ENCODE measurements at regions of chr19 and their contacts with region 1.

Region 1: DNA sequence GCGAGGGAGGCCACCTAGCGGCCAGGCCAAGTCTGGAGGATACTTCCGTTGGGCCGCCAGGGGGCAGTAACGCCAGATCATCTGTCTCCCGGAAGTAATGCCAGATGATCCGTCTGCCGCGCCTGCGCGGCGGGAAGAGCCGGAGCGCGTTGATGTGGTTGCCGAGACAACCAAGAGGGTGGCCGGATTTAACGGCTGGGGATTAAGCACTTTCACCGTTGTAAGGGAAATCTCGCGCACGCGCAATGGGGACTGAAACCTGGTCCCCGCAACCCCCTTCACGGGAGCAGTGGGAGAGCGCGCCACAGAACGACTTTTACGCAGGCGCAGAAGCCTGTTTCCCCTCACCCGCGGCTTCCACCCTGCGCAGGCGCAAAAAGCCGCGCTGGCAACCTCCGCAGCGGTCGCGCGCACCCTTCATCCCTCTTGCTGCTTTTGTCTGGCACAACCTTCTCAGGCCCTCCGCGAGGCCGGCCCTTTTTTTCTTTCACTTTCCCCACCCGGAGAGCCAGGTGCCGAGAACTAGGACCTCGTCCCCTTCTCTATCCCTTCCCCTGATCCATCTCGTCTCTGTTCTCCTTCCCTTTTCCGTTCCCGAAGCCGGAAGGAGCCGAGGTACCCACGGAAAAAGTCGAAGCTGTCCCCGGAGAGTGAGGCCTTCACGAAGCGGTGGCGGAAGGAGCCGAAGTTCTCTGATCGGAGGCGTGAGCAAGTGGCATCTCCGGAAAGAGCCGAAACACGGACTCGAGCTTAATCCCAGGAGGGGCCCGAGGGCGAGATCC is 886 bp upstream of the U2AF2 start:
- DNase-seq: peak; percentile 89

Region 2: DNA sequence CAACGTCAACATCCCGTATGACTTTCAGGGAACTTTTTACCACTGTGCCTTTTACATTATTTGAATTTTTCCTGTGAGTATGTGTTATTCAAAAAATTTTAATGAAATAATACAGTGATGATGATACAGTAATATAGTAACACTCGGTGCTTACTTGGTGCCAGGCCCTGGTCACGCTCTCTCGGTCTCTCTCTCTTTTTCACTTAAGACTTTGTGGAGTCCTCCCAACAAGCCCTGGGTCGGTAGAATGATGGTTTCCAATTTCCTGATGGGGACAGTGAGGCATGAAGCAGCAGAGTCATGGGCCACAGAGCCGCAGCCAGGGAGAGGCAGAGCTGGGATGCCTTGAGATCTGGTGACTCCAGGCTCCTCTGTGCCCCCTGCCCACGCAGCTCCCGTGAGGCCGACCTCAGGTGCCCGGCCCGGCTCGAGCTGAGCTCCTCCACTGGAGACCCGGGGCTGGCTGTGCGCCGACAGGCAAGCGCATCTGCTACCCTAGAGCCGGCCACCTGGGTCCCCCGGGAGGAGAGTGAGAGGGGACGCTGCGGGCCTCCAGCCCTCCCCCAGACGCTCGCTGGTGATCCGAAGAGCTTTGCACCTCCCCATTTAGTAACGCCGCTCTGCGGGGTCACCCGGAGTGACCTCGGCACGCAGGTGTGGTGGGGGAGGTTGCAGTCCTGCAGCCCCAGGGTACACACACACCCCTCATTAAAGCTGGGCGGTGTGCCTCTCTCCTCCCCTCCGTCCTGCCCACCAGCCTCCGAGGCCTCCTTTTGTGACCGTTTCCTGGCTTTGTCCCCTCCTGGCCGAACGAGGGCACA is 104.2 kb before region 1 on chr19:
- CTCF ChIA-PET with region 1: no interaction called
- POLR2A ChIA-PET with region 1: no interaction called
- DNase-seq: no peak

Region 3: GRCh38 chr19:55632463-55632834 is 21.5 kb before region 1 on chr19:
- CTCF ChIA-PET with region 1: interaction called, 3 read pairs
- POLR2A ChIA-PET with region 1: interaction called, 16 read pairs
- DNase-seq: peak; percentile 63

Region 4: DNA sequence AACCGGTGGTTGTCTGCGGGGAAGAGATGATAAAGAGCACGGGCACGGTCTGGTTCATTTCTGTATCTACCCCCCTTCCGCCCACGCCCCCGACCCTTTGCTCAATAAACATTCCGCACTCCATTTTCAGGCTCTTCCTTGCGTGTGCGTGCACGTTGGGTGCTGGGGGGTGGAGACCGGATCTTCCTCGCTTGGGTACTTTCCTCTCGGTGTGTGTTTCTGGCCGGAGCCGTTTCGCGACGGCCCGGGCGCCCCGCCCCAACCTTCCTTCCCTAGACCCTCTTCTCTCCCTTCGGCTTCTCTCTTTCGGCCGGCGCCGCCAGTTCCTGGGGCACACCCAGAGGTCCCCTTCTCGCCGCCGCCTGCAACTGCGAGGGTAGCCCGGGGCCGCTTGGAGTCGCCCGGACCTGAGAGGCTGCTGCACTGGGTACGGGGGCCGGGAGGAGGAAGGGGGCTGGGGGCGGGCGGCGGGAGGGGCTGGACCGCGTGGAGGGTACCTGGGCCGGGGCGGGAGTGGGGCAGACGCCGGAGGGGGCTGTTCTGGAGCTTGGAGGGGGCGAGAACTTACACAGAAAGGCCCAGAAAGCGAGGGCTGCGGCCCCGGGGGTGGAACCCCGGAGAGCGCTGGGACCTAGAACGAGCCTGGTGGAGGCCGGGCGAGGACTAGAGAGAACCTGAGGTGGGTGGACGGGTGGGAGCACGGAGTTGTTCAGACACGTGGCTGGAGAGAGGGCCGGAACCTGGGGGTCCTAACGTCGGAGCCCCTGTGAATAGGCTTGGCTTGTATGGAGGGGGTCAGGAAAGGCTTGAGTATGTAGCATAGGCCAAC is 10.4 kb before region 1 on chr19 and contains the start of gene ZNF581:
- CTCF ChIA-PET with region 1: interaction called, 7 read pairs
- POLR2A ChIA-PET with region 1: interaction called, 13 read pairs
- DNase-seq: peak; percentile 61

Region 5: GRCh38 chr19:55670280-55671053 is 16.5 kb after region 1 on chr19:
- CTCF ChIA-PET with region 1: interaction called, 10 read pairs
- POLR2A ChIA-PET with region 1: interaction called, 8 read pairs
- DNase-seq: no peak